ENCODE measurements at regions of chr10 and their contacts with region 1.

Region 1: GRCh38 chr10:66958466-66958865 is 32.6 kb downstream of the LRRTM3 start:
- DNase-seq: no peak
- H3K4me3 Mint-ChIP-seq: no peak overlapping the region
- H3K27ac Mint-ChIP-seq: no peak overlapping the region
- H3K4me1 Mint-ChIP-seq: no peaks in the 10 kb centered on the region
- H3K27me3 Mint-ChIP-seq: peaks cover 16% of the 10 kb centered on the region
- CTCF ChIP-seq: no peak

Region 2: DNA sequence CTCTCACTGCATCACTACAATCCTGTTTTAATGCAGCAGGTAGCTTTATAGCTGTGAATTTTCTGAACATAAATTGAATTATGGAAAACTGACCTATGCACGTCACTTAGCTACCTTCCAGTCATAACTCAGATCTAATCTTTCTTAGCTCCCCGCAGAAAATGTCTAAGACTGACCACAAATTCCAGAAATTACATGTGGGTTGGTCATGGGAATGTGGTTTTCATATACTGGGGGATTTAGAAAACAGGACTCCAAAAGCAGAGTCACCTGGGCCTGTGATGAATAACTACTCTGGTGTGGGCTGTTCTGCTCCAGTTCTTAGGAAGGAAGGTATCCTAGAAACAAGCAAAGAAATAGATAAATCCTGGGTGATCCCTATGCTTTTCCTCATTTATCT is 211.0 kb before region 1 on chr10:
- CTCF ChIA-PET with region 1: no interaction called
- intact Hi-C with region 1: no loop called
- DNase-seq: peak; percentile 31
- H3K4me3 Mint-ChIP-seq: no peak overlapping the region
- H3K27ac Mint-ChIP-seq: peak overlapping the region; percentile 34
- H3K4me1 Mint-ChIP-seq: peaks cover 19% of the 10 kb centered on the region
- H3K27me3 Mint-ChIP-seq: no peaks in the 10 kb centered on the region
- CTCF ChIP-seq: no peak

Region 3: GRCh38 chr10:67140641-67141040 is 182.2 kb after region 1 on chr10:
- CTCF ChIA-PET with region 1: no interaction called
- intact Hi-C with region 1: loop called (anchors 10 kb)
- DNase-seq: no peak
- H3K4me3 Mint-ChIP-seq: no peak overlapping the region
- H3K27ac Mint-ChIP-seq: no peak overlapping the region
- H3K4me1 Mint-ChIP-seq: no peaks in the 10 kb centered on the region
- H3K27me3 Mint-ChIP-seq: no peaks in the 10 kb centered on the region
- CTCF ChIP-seq: no peak